Heart left ventricle (tissue), 16 donors: ENCODE measurements at regions of chr3 and their contacts with region 1.

Region 1: GRCh38 chr3:87792534-87793336 is 266.1 kb downstream of the CGGBP1 start:
- DNase-seq: peak in 2 of 5 donors; percentile 31 to 63
- ATAC-seq: peak in 2 of 4 donors; percentile 29 to 33
- H3K4me3 ChIP-seq: peak within 1 kb of the TSS; percentile 7 to 60 (median 48)
- H3K27ac ChIP-seq: peak within 1 kb of the TSS in 6 of 12 donors; percentile 6 to 68 (median 46)
- H3K4me1 ChIP-seq: peaks cover 0 to 31% (median 0%) of the 10 kb centered on the region in 12 donors
- H3K27me3 ChIP-seq: peaks cover 7 to 49% (median 28%) of the 10 kb centered on the region in 9 donors
- CTCF ChIP-seq: no peak
- POLR2A ChIP-seq: no peak

Region 2: GRCh38 chr3:87397210-87397609 is 395.5 kb before region 1 on chr3:
- intact Hi-C with region 1: no loop called
- DNase-seq: no peak
- ATAC-seq: no peak
- H3K4me3 ChIP-seq: no peak overlapping the region
- H3K27ac ChIP-seq: no peak overlapping the region
- H3K4me1 ChIP-seq: no peaks in the 10 kb centered on the region
- H3K27me3 ChIP-seq: no peaks in the 10 kb centered on the region
- CTCF ChIP-seq: no peak
- POLR2A ChIP-seq: no peak

Region 3: DNA sequence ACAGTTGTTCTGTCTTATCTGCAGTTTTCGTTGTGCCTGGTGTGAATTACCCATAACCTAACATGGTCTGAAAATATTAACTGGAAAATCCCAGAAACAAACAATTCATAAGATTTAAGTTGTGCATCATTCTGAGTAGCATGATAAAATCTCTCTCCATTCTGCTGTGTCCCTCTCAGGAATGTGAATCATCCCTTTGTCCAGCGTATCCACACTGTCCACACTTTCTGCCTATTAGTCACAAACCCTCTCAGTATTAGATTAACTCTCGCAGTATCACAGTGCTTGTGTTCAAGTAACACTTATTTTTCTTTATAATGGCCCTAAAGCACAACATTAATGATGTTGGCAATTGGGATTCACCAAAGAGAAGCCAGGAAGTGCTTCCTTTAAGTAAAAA is 62.9 kb after region 1 on chr3:
- intact Hi-C with region 1: loop called in 1 of 10 experiments (anchors 10 kb)
- DNase-seq: no peak
- ATAC-seq: no peak
- H3K4me3 ChIP-seq: no peak overlapping the region
- H3K27ac ChIP-seq: no peak overlapping the region
- H3K4me1 ChIP-seq: no peaks in the 10 kb centered on the region
- H3K27me3 ChIP-seq: no peaks in the 10 kb centered on the region
- CTCF ChIP-seq: no peak
- POLR2A ChIP-seq: no peak